Activated CD8-positive, alpha-beta T cell treated with anti-CD3 and anti-CD28 coated beads for 36 hours (primary cell): ENCODE measurements at regions of chr9 and their contacts with region 1.

Region 1: GRCh38 chr9:124257844-124258606 is at the start of gene NEK6:
- DNase-seq: peak; percentile 25
- ATAC-seq: peak; percentile 28
- H3K4me3 Mint-ChIP-seq: peak within 1 kb of the TSS; percentile 85
- H3K27ac Mint-ChIP-seq: peak within 1 kb of the TSS; percentile 88
- H3K4me1 Mint-ChIP-seq: peaks cover 53% of the 10 kb centered on the region
- H3K27me3 Mint-ChIP-seq: peaks cover 41% of the 10 kb centered on the region
- CTCF ChIP-seq: no peak
- total RNA-seq, gene NEK6: 20.2 to 21.8 TPM

Region 2: GRCh38 chr9:124218438-124218982 is 39.5 kb before region 1 on chr9:
- CTCF ChIA-PET with region 1: interaction called, 3 read pairs
- POLR2A ChIA-PET with region 1: interaction called, 3 read pairs
- intact Hi-C with region 1: loop called (anchors 5 kb)
- DNase-seq: peak; percentile 85
- ATAC-seq: peak; percentile 57
- H3K4me3 Mint-ChIP-seq: no peak overlapping the region
- H3K27ac Mint-ChIP-seq: peak overlapping the region; percentile 42
- H3K4me1 Mint-ChIP-seq: peaks cover 53% of the 10 kb centered on the region
- H3K27me3 Mint-ChIP-seq: peaks cover 1% of the 10 kb centered on the region
- CTCF ChIP-seq: no peak